Panc1 (cell line): ENCODE measurements at regions of chrX and their contacts with region 1.

Region 1: DNA sequence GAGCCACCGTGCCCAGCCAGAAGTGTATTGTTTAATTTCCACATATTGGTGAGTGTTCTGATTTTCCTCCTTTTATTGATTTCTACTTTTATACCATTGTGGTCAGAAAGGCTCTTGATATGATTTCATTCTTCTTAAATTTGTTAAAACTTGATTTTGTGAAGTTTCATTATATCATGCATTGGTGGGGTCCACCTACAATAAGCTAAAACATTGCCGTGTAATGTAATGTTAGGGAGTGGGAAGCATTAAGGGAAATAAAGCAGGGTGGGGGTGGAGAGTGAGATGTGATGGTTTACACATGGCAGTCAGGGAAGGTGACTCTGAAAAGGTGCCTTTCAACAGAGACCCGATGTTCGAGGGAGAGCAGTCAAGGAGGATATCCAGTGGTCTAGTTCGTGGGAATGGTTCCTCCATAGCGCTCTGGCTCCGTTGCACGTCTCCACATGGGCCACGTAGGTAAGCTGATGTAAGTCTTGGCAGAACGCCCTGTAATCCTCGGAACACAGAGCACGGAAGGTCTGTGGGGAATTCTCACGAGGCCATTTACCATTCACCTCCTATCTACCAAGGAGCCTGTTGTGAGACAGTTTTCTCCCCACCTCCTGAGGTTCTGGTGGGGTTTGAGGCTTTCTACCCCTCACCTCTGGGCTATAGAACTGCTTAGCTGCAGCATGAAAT is 7.7 kb upstream of the WDR13 start:
- DNase-seq: no peak
- ATAC-seq: no peak
- H3K4me3 ChIP-seq: no peak overlapping the region
- H3K27ac ChIP-seq: no peak overlapping the region
- H3K4me1 ChIP-seq: peaks cover 3% of the 10 kb centered on the region; the same call in 1 of the 2 replicates
- H3K27me3 ChIP-seq: no peaks in the 10 kb centered on the region
- CTCF ChIP-seq: no peak

Region 2: GRCh38 chrX:48025561-48025960 is 564.1 kb before region 1 on chrX:
- CTCF ChIA-PET with region 1: no interaction called
- POLR2A ChIA-PET with region 1: no interaction called
- in situ Hi-C with region 1: no loop called
- intact Hi-C with region 1: no loop called
- DNase-seq: no peak
- ATAC-seq: peak; percentile 59
- H3K4me3 ChIP-seq: no peak overlapping the region
- H3K27ac ChIP-seq: no peak overlapping the region
- H3K4me1 ChIP-seq: no peaks in the 10 kb centered on the region; the same call in 1 of the 2 replicates
- H3K27me3 ChIP-seq: no peaks in the 10 kb centered on the region
- CTCF ChIP-seq: peak; percentile 70

Region 3: DNA sequence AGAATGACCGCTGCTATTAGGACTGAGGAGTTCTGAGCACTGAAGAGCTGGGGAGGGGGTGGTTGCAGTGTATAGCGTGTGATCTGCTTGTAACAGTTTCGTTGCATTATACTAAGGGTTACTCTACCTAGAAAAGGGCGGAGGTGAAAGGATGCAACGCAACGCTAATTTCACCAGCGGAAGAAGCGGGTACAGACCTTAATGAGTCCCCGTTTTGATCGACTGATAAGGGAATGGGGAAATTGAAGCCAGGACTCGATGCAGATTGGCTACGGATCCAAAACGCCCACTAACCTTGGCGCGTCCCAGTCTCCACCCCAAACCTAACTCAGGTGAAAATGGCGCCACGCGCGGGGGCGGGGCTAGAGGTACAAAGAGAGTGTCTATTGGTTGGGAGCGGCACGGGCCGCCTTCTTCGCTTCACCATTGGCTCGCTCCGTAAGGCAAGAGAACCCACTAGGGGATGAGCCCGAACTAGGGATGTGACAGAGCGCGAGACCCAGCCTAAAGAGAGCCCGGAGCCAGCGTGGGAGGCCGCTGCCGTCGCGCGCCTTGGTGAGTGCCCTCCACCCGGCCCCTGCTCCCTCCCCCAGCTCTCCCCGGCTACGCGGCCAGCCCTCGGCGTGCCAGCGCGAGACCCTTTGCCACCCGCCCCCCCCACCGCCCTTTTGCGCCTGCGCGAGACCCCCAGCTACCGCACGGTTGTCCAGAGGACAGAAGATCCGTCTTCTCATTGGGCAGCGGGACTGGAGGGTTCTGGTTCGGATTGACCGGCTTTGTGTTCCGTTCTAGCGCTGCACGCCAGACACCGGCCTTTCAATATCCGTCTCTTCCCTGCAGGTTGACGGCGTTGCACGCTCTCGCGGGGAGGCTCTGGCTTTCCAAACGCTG is 68.0 kb before region 1 on chrX and contains the start of gene EBP:
- CTCF ChIA-PET with region 1: no interaction called
- POLR2A ChIA-PET with region 1: no interaction called
- in situ Hi-C with region 1: no loop called
- intact Hi-C with region 1: no loop called
- DNase-seq: peak; percentile 58
- ATAC-seq: peak; percentile 99
- H3K4me3 ChIP-seq: peak within 1 kb of the TSS; percentile 78 to 82
- H3K27ac ChIP-seq: peak within 1 kb of the TSS; percentile 93
- H3K4me1 ChIP-seq: no peaks in the 10 kb centered on the region; the same call in 1 of the 2 replicates
- H3K27me3 ChIP-seq: no peaks in the 10 kb centered on the region
- CTCF ChIP-seq: no peak
- total RNA-seq, gene EBP: 157 TPM

Region 4: DNA sequence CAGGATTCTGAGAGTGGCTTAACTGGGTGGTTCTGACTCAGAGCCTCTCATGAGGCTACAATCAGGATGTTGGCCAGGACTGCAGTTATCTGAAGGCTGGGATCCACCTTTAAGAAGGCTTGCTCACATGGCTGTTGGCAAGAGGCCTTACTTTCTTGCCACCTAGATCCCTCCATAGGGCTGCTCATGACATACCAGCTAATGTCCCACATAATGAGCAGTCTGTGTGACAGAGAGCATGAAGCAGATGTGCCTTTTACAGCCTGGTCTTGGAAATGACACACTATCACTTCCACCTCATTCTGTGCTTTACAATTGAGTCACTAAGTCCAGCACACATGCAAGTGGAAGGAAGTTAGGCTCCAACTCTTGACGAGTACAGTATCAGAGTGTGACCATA is 19.7 kb before region 1 on chrX:
- CTCF ChIA-PET with region 1: no interaction called
- POLR2A ChIA-PET with region 1: no interaction called
- in situ Hi-C with region 1: no loop called
- intact Hi-C with region 1: no loop called
- DNase-seq: no peak
- ATAC-seq: no peak
- H3K4me3 ChIP-seq: no peak overlapping the region
- H3K27ac ChIP-seq: no peak overlapping the region
- H3K4me1 ChIP-seq: no peaks in the 10 kb centered on the region
- H3K27me3 ChIP-seq: no peaks in the 10 kb centered on the region
- CTCF ChIP-seq: no peak

Region 5: GRCh38 chrX:48854898-48855297 is 265.3 kb after region 1 on chrX:
- CTCF ChIA-PET with region 1: no interaction called
- POLR2A ChIA-PET with region 1: no interaction called
- in situ Hi-C with region 1: no loop called
- intact Hi-C with region 1: no loop called
- DNase-seq: no peak
- ATAC-seq: no peak
- H3K4me3 ChIP-seq: no peak overlapping the region
- H3K27ac ChIP-seq: no peak overlapping the region
- H3K4me1 ChIP-seq: no peaks in the 10 kb centered on the region
- H3K27me3 ChIP-seq: no peaks in the 10 kb centered on the region
- CTCF ChIP-seq: peak; percentile 70

Region 6: DNA sequence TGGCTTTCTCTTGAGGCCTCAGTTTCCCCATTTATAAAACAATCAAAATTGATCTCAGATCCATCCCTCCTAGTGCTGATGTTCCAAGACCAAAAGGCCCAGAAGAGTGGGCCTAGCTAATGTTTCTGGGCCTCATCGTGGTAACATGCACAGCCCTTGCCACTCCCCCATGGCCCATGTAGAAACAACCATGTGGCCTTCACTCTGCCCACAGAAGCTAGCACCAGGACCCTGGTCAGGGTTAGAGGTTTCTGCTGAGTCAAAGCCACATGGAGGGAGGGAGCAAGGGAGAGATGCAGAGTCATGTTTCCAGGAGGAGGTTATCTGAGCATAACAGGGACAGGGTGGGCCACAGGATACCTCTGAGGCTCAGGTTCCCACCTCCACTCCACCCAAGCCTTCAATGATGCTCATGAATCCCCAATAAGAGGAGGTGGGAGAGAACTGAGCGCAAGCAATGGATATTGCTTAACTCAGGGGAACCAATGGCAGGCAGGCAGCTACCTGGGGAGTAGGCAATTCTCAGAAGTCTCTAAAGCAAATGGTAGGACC is 350.9 kb after region 1 on chrX:
- CTCF ChIA-PET with region 1: no interaction called
- POLR2A ChIA-PET with region 1: interaction called, 15 read pairs
- in situ Hi-C with region 1: no loop called
- intact Hi-C with region 1: no loop called
- DNase-seq: no peak
- ATAC-seq: no peak
- H3K4me3 ChIP-seq: no peak overlapping the region
- H3K27ac ChIP-seq: no peak overlapping the region
- H3K4me1 ChIP-seq: no peaks in the 10 kb centered on the region
- H3K27me3 ChIP-seq: no peaks in the 10 kb centered on the region
- CTCF ChIP-seq: no peak